ENCODE measurements at regions of chrX and their contacts with region 1.

Region 1: DNA sequence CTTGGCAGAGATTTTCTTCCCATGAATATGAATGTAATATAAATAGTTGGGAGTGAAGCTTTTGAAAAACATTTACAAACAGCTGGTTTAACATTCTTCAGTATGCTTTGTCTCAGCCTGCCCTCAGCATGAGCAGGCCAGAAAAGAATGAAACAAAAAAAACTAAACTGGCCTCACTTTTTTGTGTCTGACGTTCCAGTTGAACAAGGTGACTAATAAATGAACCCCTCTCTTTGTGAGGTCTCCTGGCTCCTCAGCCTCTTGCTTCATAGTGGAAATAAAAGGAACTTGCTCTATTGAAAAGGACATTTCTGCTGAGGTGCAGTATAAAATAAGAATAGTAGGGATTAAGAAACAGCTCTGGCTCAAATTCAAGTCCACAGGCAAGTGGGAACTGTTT is 9.4 kb downstream of the CHST7 start:
- DNase-seq: no peak
- H3K4me3 ChIP-seq: no peak overlapping the region
- H3K27ac ChIP-seq: peak overlapping the region; percentile 8 to 73 (median 33)
- H3K4me1 ChIP-seq: peaks cover 0 to 6% (median 0%) of the 10 kb centered on the region in 4 donors
- H3K27me3 ChIP-seq: no peaks in the 10 kb centered on the region
- CTCF ChIP-seq: no peak
- EP300 ChIP-seq: no peak
- POLR2A ChIP-seq: no peak

Region 2: DNA sequence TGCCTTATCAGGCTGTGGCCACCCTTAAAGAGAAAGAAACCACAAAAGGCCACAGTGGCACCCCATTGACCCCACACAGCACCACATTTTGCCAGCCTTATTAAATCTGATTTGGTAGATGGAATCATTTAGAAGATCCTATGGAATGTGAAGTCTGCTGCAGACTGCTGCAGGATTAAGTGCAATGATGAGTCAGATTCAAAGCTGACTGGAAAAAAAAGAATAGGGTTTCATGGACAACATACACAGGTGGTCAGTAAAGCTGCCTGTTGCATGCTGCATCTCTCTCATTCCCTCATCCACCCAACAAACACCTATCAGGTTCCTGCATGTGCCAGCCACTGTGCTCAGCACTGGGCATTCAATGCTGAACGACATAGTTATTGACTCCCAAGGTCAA is 47.2 kb after region 1 on chrX:
- intact Hi-C with region 1: loop called (anchors 5 kb)
- DNase-seq: no peak
- H3K4me3 ChIP-seq: no peak overlapping the region
- H3K27ac ChIP-seq: peak overlapping the region in 2 of 4 donors; percentile 34 to 45
- H3K4me1 ChIP-seq: no peaks in the 10 kb centered on the region
- H3K27me3 ChIP-seq: no peaks in the 10 kb centered on the region
- CTCF ChIP-seq: no peak
- EP300 ChIP-seq: no peak
- POLR2A ChIP-seq: no peak

Measured in sigmoid colon (tissue), 7 donors.